ENCODE measurements at regions of chr3 and their contacts with region 1.

Region 1: GRCh38 chr3:178947738-178948137 is 123.9 kb downstream of the ZMAT3 start:
- DNase-seq: no peak
- ATAC-seq: peak in 1 of 4 donors; percentile 49
- H3K4me3 ChIP-seq: no peak overlapping the region
- H3K27ac ChIP-seq: no peak overlapping the region
- H3K4me1 ChIP-seq: no peaks in the 10 kb centered on the region
- H3K27me3 ChIP-seq: no peaks in the 10 kb centered on the region
- CTCF ChIP-seq: peak in 9 of 12 donors; percentile 16 to 54 (median 45)
- POLR2A ChIP-seq: no peak

Region 2: DNA sequence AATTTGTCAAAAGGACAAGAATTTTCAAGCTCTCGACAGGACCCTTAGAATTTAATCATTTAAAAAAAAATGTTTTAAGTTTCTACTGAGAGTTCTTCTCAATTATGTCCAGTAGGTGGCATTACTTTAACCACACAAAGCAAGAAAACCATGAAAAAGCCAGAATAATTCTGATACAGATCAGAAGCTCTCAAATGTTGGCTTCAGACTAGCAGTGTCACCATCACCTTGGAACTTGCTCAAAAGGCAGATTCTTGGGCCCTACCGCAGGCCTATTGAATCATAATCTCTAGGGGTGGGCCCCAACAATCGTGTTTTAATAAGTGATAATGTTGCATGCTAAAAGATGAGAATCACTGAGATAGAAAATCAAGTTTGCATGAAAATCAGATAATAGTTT is 511.0 kb before region 1 on chr3:
- intact Hi-C with region 1: loop called in 8 of 10 experiments (anchors 1 to 5 kb)
- DNase-seq: no peak
- ATAC-seq: peak in 1 of 4 donors; percentile 31
- H3K4me3 ChIP-seq: no peak overlapping the region
- H3K27ac ChIP-seq: no peak overlapping the region
- H3K4me1 ChIP-seq: peaks cover 0 to 9% (median 1%) of the 10 kb centered on the region in 12 donors
- H3K27me3 ChIP-seq: no peaks in the 10 kb centered on the region
- CTCF ChIP-seq: peak; percentile 42 to 68 (median 55)
- POLR2A ChIP-seq: no peak

Region 3: GRCh38 chr3:178443634-178444033 is 504.1 kb before region 1 on chr3:
- intact Hi-C with region 1: loop called in 8 of 10 experiments (anchors 2 to 5 kb)
- DNase-seq: no peak
- ATAC-seq: peak in 1 of 4 donors; percentile 20
- H3K4me3 ChIP-seq: no peak overlapping the region
- H3K27ac ChIP-seq: no peak overlapping the region
- H3K4me1 ChIP-seq: no peaks in the 10 kb centered on the region
- H3K27me3 ChIP-seq: no peaks in the 10 kb centered on the region
- CTCF ChIP-seq: peak in 6 of 12 donors; percentile 13 to 50 (median 31)
- POLR2A ChIP-seq: no peak

Region 4: DNA sequence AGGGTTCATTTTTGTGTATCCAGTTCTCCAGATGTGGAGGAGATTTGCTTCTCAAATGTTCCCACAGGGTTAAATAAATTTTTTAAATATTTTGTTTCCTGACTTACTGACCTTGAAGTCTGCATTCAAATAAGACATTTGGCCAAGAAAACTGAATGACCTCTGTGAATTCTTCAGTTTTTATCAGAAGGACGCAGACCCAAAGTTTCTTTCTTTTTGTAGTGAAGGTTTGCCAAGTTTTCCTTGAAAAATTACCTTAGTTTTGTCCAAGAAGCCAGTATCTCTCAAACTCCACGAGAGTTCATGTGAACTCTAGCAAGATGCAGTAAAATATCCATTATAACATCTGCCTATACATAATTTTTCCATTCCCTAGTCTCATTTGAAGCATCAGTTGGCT is 79.1 kb before region 1 on chr3:
- intact Hi-C with region 1: no loop called
- DNase-seq: no peak
- ATAC-seq: no peak
- H3K4me3 ChIP-seq: no peak overlapping the region
- H3K27ac ChIP-seq: peak overlapping the region in 1 of 12 donors; percentile 35
- H3K4me1 ChIP-seq: peaks cover 0 to 16% (median 4%) of the 10 kb centered on the region in 12 donors
- H3K27me3 ChIP-seq: no peaks in the 10 kb centered on the region
- CTCF ChIP-seq: no peak
- POLR2A ChIP-seq: no peak

Region 5: GRCh38 chr3:179063945-179064560 is 116.3 kb after region 1 on chr3:
- intact Hi-C with region 1: no loop called
- DNase-seq: no peak
- ATAC-seq: no peak
- H3K4me3 ChIP-seq: no peak overlapping the region
- H3K27ac ChIP-seq: no peak overlapping the region
- H3K4me1 ChIP-seq: peaks cover 0 to 24% (median 9%) of the 10 kb centered on the region in 12 donors
- H3K27me3 ChIP-seq: no peaks in the 10 kb centered on the region
- CTCF ChIP-seq: no peak
- POLR2A ChIP-seq: no peak